ENCODE measurements at regions of chr2 and their contacts with region 1.

Region 1: GRCh38 chr2:42974721-42975717 is 182.6 kb upstream of the HAAO start:
- DNase-seq: peak; percentile 66 to 76 (median 75)
- ATAC-seq: peak; percentile 89
- H3K4me3 ChIP-seq: no peak overlapping the region
- H3K27ac ChIP-seq: no peak overlapping the region
- H3K4me1 ChIP-seq: peaks cover 0 to 30% of the 10 kb centered on the region in 2 experiments; a peak in 3 of 5 replicates
- H3K27me3 ChIP-seq: no peaks in the 10 kb centered on the region
- CTCF ChIP-seq: peak; percentile 79 to 88 (median 87)
- EP300 ChIP-seq: no peak
- POLR2A ChIP-seq: no peak
- RAD21 ChIP-seq: peak; percentile 85 to 92

Region 2: GRCh38 chr2:43105586-43106558 is 130.9 kb after region 1 on chr2:
- CTCF ChIA-PET with region 1: no interaction called
- POLR2A ChIA-PET with region 1: no interaction called
- in situ Hi-C with region 1: no loop called
- intact Hi-C with region 1: loop called (anchors 5 kb)
- DNase-seq: peak; percentile 77 to 81 (median 80)
- ATAC-seq: peak; percentile 98
- H3K4me3 ChIP-seq: no peak overlapping the region
- H3K27ac ChIP-seq: no peak overlapping the region
- H3K4me1 ChIP-seq: peaks cover 12 to 16% of the 10 kb centered on the region in 2 experiments
- H3K27me3 ChIP-seq: no peaks in the 10 kb centered on the region
- CTCF ChIP-seq: peak; percentile 61 to 82 (median 71)
- EP300 ChIP-seq: no peak
- POLR2A ChIP-seq: no peak
- RAD21 ChIP-seq: peak; percentile 60 to 67

Region 3: GRCh38 chr2:43239981-43240761 is 265.2 kb after region 1 on chr2:
- CTCF ChIA-PET with region 1: interaction called, 4 read pairs
- POLR2A ChIA-PET with region 1: no interaction called
- in situ Hi-C with region 1: loop called (anchors 10 kb)
- intact Hi-C with region 1: no loop called
- DNase-seq: peak in 2 of 4 experiments; percentile 22 to 24
- ATAC-seq: peak; percentile 61
- H3K4me3 ChIP-seq: no peak overlapping the region
- H3K27ac ChIP-seq: no peak overlapping the region
- H3K4me1 ChIP-seq: no peaks in the 10 kb centered on the region; a peak in 1 of 5 replicates
- H3K27me3 ChIP-seq: no peaks in the 10 kb centered on the region
- CTCF ChIP-seq: peak; percentile 37 to 49 (median 47); a peak in 4 of 6 replicates
- EP300 ChIP-seq: no peak
- POLR2A ChIP-seq: no peak
- RAD21 ChIP-seq: peak; percentile 30 to 49; a peak in 3 of 4 replicates